ENCODE measurements at regions of chr16 and their contacts with region 1.

Region 1: DNA sequence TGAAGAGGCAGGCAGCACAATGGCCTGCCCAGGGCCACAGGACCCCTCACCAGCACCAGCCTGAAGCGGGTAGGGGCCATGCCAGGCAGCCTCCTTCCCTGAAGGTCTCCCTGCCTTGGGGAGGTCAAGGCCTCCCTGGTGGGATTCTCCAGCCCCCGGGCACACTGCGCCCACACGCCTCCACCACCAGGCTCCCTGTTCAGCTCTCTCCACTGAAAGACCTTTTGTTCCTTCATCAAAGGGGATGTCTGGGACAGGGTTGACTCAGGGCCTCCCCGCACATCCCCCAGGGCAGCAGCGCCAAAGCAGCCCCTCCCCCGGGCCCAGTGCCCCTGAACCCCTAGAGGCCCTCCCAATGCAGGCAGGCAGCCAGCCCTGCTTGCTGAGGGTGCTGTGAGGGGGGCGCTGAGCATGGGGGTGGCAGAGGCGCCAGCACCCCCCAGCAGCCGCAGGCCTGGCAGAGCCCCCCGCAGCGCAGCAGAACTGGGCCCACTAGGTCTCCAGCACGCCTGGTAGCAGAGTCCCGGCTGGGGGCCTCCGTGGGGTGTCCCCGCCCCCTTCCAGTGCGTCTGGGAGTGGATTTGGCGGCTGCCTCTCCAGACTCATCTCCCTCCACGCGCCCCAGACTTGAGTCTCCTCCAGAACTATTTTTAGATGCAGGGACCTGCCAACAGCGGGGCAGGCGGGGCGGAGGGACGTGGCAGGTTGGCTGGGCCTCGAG is 13.1 kb downstream of the BCAR1 start:
- DNase-seq: no peak
- ATAC-seq: no peak
- H3K4me3 ChIP-seq: no peak overlapping the region
- H3K27ac ChIP-seq: no peak overlapping the region
- H3K4me1 ChIP-seq: no peaks in the 10 kb centered on the region
- H3K27me3 ChIP-seq: no peaks in the 10 kb centered on the region
- CTCF ChIP-seq: no peak
- EP300 ChIP-seq: no peak
- POLR2A ChIP-seq: no peak
- RAD21 ChIP-seq: no peak

Region 2: DNA sequence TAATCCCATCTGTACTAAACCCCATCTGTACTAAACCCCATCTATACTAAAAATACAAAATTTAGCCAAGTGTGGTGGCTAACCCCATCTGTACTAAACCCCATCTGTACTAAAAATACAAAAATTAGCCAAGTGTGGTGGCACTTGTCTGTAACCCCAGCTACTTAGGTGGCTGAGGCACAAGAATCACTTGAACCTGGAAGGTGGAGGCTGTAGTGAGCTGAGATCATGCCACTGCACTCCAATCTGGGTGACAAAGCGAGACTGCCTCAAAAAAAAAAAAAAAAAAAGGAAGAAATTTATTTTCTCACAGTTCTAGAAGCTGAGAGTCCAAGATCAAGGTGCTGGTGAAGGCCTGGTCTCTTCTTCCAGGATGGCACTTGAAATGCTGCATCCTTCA is 77.9 kb before region 1 on chr16:
- CTCF ChIA-PET with region 1: no interaction called
- POLR2A ChIA-PET with region 1: no interaction called
- RAD21 ChIA-PET with region 1: no interaction called
- SMC1A ChIA-PET with region 1: no interaction called
- in situ Hi-C with region 1: no loop called
- intact Hi-C with region 1: no loop called
- DNase-seq: no peak
- ATAC-seq: no peak
- H3K4me3 ChIP-seq: no peak overlapping the region
- H3K27ac ChIP-seq: no peak overlapping the region
- H3K4me1 ChIP-seq: no peaks in the 10 kb centered on the region
- H3K27me3 ChIP-seq: no peaks in the 10 kb centered on the region
- CTCF ChIP-seq: no peak
- EP300 ChIP-seq: no peak
- POLR2A ChIP-seq: no peak
- RAD21 ChIP-seq: no peak

Region 3: GRCh38 chr16:75251280-75252048 is 13.2 kb after region 1 on chr16 and contains the start of gene BCAR1:
- CTCF ChIA-PET with region 1: interaction called, 11 read pairs
- POLR2A ChIA-PET with region 1: interaction called, 3 read pairs
- RAD21 ChIA-PET with region 1: no interaction called
- SMC1A ChIA-PET with region 1: interaction called, 3 read pairs
- in situ Hi-C with region 1: no loop called
- intact Hi-C with region 1: no loop called
- DNase-seq: no peak
- ATAC-seq: peak; percentile 83
- H3K4me3 ChIP-seq: peak within 1 kb of the TSS; percentile 61
- H3K27ac ChIP-seq: no peak within 1 kb of the TSS
- H3K4me1 ChIP-seq: peaks cover 4% of the 10 kb centered on the region
- H3K27me3 ChIP-seq: peaks cover 0 to 4% of the 10 kb centered on the region in 2 experiments; a peak in 1 of 4 replicates
- CTCF ChIP-seq: no peak
- EP300 ChIP-seq: no peak
- POLR2A ChIP-seq: no peak; the same call in 1 of the 2 replicates
- RAD21 ChIP-seq: no peak
- polyA plus RNA-seq, gene BCAR1: 0.13 TPM in 1 of 2 experiments, not detected in the other

Region 4: DNA sequence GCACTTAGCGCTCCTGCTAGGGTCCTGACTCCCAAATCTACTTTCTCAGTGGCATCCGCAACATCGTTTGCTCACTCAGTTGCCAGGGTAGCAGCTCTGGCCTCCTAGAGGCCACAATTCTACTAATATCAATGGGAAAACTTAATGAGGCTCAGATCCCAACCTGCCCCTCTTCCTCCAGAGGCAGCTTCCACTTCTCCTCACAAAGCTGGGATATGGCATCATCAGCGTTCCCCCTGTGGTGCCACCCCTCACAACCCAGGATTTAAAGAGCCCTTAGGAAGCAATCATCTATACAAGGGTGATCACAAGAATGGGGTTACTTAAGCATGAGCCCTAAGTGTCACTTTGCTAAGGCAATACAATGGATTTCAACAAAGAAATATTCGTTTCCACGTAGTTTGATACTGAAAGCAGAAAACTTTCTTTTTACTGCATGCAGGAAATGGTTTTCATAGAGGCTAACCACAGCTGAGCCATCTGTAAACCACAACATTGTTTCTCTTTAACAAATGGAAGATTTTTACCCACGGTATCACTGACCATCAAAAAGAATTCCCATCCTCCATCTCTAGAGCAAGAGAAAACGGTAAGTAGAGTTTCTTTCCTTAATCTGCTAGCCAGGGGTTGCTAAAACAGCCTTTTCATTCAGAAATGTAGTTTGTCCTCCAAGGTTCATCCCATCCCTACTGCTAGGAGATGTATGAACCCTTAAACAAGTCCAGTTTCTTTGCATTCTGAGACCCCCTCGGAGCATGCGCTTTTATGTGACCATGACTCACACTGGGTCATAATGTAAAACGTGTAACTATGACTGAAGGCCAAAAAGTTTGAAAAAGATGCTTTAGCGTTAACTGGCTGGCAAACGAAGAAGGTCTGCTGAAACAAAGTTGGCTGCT is 81.5 kb after region 1 on chr16:
- CTCF ChIA-PET with region 1: interaction called, 11 read pairs
- POLR2A ChIA-PET with region 1: no interaction called
- RAD21 ChIA-PET with region 1: interaction called, 12 read pairs
- SMC1A ChIA-PET with region 1: interaction called, 5 read pairs
- in situ Hi-C with region 1: no loop called
- intact Hi-C with region 1: loop called (anchors 5 kb)
- DNase-seq: peak; percentile 78
- ATAC-seq: peak; percentile 76
- H3K4me3 ChIP-seq: peak overlapping the region; percentile 4; the same call in 1 of the 2 replicates
- H3K27ac ChIP-seq: peak overlapping the region; percentile 79
- H3K4me1 ChIP-seq: peaks cover 34% of the 10 kb centered on the region
- H3K27me3 ChIP-seq: no peaks in the 10 kb centered on the region
- CTCF ChIP-seq: no peak
- EP300 ChIP-seq: peak; percentile 67 to 86; a peak in 3 of 4 replicates
- POLR2A ChIP-seq: no peak
- RAD21 ChIP-seq: 0 out of 2 replicates have a peak, but pooled peaks have one; percentile 14

Region 5: GRCh38 chr16:75402821-75403475 is 164.7 kb after region 1 on chr16:
- CTCF ChIA-PET with region 1: interaction called, 21 read pairs
- POLR2A ChIA-PET with region 1: no interaction called
- RAD21 ChIA-PET with region 1: interaction called, 7 read pairs
- SMC1A ChIA-PET with region 1: interaction called, 8 read pairs
- in situ Hi-C with region 1: no loop called
- intact Hi-C with region 1: loop called (anchors 5 kb)
- DNase-seq: no peak
- ATAC-seq: peak; percentile 59; the same call in 2 of the 3 replicates
- H3K4me3 ChIP-seq: no peak overlapping the region
- H3K27ac ChIP-seq: no peak overlapping the region
- H3K4me1 ChIP-seq: no peaks in the 10 kb centered on the region
- H3K27me3 ChIP-seq: no peaks in the 10 kb centered on the region
- CTCF ChIP-seq: peak; percentile 45 to 60 (median 55); a peak in 5 of 6 replicates
- EP300 ChIP-seq: no peak
- POLR2A ChIP-seq: no peak
- RAD21 ChIP-seq: peak; percentile 59

Region 6: GRCh38 chr16:75660726-75661302 is 422.5 kb after region 1 on chr16:
- CTCF ChIA-PET with region 1: no interaction called
- POLR2A ChIA-PET with region 1: no interaction called
- RAD21 ChIA-PET with region 1: no interaction called
- SMC1A ChIA-PET with region 1: no interaction called
- in situ Hi-C with region 1: no loop called
- intact Hi-C with region 1: no loop called
- DNase-seq: no peak
- ATAC-seq: no peak
- H3K4me3 ChIP-seq: no peak overlapping the region
- H3K27ac ChIP-seq: no peak overlapping the region
- H3K4me1 ChIP-seq: no peaks in the 10 kb centered on the region
- H3K27me3 ChIP-seq: no peaks in the 10 kb centered on the region
- CTCF ChIP-seq: no peak
- EP300 ChIP-seq: no peak
- POLR2A ChIP-seq: no peak
- RAD21 ChIP-seq: no peak